MCF 10A (cell line): ENCODE measurements at regions of chr2 and their contacts with region 1.

Region 1: GRCh38 chr2:105576440-105577252 is 168.1 kb upstream of the NCK2 start:
- DNase-seq: peak; percentile 57
- H3K4me3 Mint-ChIP-seq: no peak overlapping the region
- H3K27ac Mint-ChIP-seq: peak overlapping the region; percentile 52
- H3K4me1 Mint-ChIP-seq: peaks cover 15% of the 10 kb centered on the region
- H3K27me3 Mint-ChIP-seq: peaks cover 32% of the 10 kb centered on the region
- CTCF ChIP-seq: peak; percentile 57

Region 2: DNA sequence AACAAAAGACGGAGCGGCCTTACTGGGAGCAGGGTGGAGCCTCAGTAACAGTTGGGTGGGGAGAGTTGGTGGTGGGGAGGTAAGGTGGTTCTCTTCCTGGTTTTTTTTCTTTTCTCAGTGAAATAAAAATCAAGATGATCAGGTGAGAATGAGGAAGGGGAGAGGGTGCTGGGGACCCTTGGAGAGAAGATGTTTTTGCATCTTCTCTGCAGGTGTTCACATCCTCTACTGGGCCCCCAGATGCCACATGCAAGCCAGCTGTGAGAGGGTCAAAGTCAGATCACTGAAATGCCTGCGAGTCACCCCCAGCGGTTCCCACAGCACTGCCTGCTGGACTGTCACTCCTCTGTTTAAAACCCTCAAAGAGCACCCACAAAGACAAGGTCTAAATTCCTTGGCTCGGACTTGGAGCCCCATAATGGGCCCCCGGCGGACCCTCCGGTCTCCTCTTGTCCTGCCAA is 108.0 kb before region 1 on chr2:
- CTCF ChIA-PET with region 1: no interaction called
- POLR2A ChIA-PET with region 1: no interaction called
- intact Hi-C with region 1: no loop called
- DNase-seq: no peak
- H3K4me3 Mint-ChIP-seq: no peak overlapping the region
- H3K27ac Mint-ChIP-seq: no peak overlapping the region
- H3K4me1 Mint-ChIP-seq: no peaks in the 10 kb centered on the region
- H3K27me3 Mint-ChIP-seq: peaks cover 11% of the 10 kb centered on the region
- CTCF ChIP-seq: no peak

Region 3: GRCh38 chr2:105588581-105588980 is 11.9 kb after region 1 on chr2:
- CTCF ChIA-PET with region 1: interaction called, 12 read pairs
- POLR2A ChIA-PET with region 1: no interaction called
- intact Hi-C with region 1: no loop called
- DNase-seq: no peak
- H3K4me3 Mint-ChIP-seq: no peak overlapping the region
- H3K27ac Mint-ChIP-seq: no peak overlapping the region
- H3K4me1 Mint-ChIP-seq: no peaks in the 10 kb centered on the region
- H3K27me3 Mint-ChIP-seq: no peaks in the 10 kb centered on the region
- CTCF ChIP-seq: no peak

Region 4: DNA sequence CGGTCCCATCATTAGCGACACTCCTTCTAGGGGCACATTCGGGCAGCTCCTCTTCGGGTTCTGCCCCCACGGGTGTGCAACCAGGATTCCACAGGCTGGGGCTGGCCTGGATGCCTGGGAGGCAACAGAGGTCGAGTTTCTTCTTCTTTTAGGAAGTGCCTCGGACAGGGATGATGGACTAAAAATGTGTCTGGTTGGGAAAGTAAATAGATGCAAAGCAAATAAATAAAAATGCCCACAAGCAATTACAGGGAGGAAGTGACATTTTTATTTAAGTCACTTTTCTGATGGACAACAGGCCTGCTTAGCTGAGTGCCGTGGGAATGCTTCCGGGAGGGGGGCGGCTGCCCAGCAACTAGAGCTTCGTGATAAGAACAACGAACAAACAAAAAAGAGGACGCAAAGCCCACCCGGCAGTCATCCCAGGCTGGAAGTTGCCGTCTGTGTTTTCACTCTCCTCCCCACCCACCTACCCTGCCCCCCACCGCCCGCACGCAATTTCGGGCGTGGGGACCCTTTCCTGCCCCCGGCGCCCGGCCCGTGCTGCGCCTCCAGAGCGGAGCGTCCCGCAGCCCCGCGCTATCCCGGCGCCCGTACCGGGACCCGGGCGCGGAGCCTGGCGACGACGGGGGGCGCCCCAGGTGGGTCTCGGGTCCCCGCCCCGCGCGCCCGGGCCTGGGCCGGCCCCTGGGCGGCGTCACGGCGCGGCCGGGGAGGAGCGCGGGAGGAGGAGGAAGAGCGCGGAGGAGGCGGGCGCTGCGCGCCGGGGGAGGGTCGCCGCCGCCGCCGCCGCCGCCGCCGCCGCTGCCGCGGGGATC is 167.7 kb after region 1 on chr2:
- CTCF ChIA-PET with region 1: interaction called, 4 read pairs
- POLR2A ChIA-PET with region 1: no interaction called
- intact Hi-C with region 1: loop called (anchors 5 kb)
- DNase-seq: peak; percentile 52
- H3K4me3 Mint-ChIP-seq: peak overlapping the region; percentile 79
- H3K27ac Mint-ChIP-seq: peak overlapping the region; percentile 58
- H3K4me1 Mint-ChIP-seq: peaks cover 22% of the 10 kb centered on the region
- H3K27me3 Mint-ChIP-seq: no peaks in the 10 kb centered on the region
- CTCF ChIP-seq: no peak

Region 5: GRCh38 chr2:105969555-105969954 is 392.9 kb after region 1 on chr2:
- CTCF ChIA-PET with region 1: no interaction called
- POLR2A ChIA-PET with region 1: no interaction called
- intact Hi-C with region 1: loop called (anchors 5 kb)
- DNase-seq: peak; percentile 35
- H3K4me3 Mint-ChIP-seq: no peak overlapping the region
- H3K27ac Mint-ChIP-seq: no peak overlapping the region
- H3K4me1 Mint-ChIP-seq: no peaks in the 10 kb centered on the region
- H3K27me3 Mint-ChIP-seq: peaks cover 12% of the 10 kb centered on the region
- CTCF ChIP-seq: no peak

Region 6: DNA sequence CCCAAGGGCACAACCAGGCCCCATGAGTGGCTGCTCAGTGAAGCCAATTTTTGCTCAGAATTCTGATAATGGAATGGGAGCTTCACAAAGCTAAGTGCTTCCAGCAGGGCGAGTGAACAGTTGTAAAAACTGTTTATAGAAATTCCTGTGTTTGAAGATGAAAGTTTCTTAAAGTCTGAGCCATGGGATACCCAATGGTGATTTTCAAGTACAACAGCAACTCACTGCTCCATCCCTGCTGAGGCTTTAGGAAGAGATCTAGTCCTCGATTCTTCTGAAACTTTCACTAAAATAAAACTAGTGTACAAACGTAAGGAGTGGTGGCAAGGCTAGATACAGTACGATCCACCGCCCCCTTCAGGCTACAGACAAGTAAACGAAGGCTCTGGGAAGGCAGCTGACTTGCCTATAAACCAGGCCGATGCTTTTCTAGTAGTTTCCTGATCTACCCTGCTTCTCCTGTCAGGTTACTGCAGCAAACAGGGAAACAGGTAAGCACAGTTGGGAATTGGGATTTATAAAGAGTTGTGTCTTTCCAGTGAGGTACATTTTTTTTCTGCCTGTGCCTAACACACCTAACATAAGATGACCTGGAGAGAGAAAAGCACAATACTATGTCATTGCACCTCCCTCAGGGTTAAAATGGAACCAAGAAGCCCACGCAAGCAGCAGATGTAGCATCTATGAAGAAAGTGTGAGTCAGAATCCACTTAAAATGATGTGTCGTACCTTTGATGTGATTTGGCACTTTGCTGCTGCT is 508.7 kb after region 1 on chr2:
- CTCF ChIA-PET with region 1: interaction called, 10 read pairs
- POLR2A ChIA-PET with region 1: no interaction called
- intact Hi-C with region 1: loop called (anchors 1 kb)
- DNase-seq: peak; percentile 45
- H3K4me3 Mint-ChIP-seq: no peak overlapping the region
- H3K27ac Mint-ChIP-seq: no peak overlapping the region
- H3K4me1 Mint-ChIP-seq: no peaks in the 10 kb centered on the region
- H3K27me3 Mint-ChIP-seq: no peaks in the 10 kb centered on the region
- CTCF ChIP-seq: peak; percentile 11